GM12878 (cell line): ENCODE measurements at regions of chr22 and their contacts with region 1.

Region 1: GRCh38 chr22:30742291-30743256 is 47.9 kb downstream of the OSBP2 start:
- DNase-seq: no peak
- ATAC-seq: peak; percentile 7; the same call in 1 of the 3 replicates
- H3K4me3 ChIP-seq: no peak overlapping the region; the same call in 1 of the 2 replicates
- H3K27ac ChIP-seq: no peak overlapping the region; the same call in 1 of the 2 replicates
- H3K4me1 ChIP-seq: peaks cover 52% of the 10 kb centered on the region
- H3K27me3 ChIP-seq: no peaks in the 10 kb centered on the region
- CTCF ChIP-seq: no peak
- EP300 ChIP-seq: no peak
- POLR2A ChIP-seq: no peak
- RAD21 ChIP-seq: no peak

Region 2: GRCh38 chr22:30705710-30706651 is 36.6 kb before region 1 on chr22:
- CTCF ChIA-PET with region 1: interaction called, 3 read pairs
- POLR2A ChIA-PET with region 1: interaction called, 4 read pairs
- RAD21 ChIA-PET with region 1: interaction called, 9 read pairs
- SMC1A ChIA-PET with region 1: interaction called, 15 read pairs
- in situ Hi-C with region 1: no loop called
- intact Hi-C with region 1: loop called (anchors 2 kb)
- DNase-seq: peak; percentile 72
- ATAC-seq: peak; percentile 85
- H3K4me3 ChIP-seq: peak overlapping the region; percentile 19; the same call in 1 of the 2 replicates
- H3K27ac ChIP-seq: peak overlapping the region; percentile 70
- H3K4me1 ChIP-seq: peaks cover 35% of the 10 kb centered on the region
- H3K27me3 ChIP-seq: no peaks in the 10 kb centered on the region
- CTCF ChIP-seq: peak in 1 of 3 experiments; percentile 6; a peak in 1 of 6 replicates
- EP300 ChIP-seq: no peak; a peak in 2 of 4 replicates
- POLR2A ChIP-seq: peak; percentile 51; the same call in 1 of the 2 replicates
- RAD21 ChIP-seq: no peak

Region 3: DNA sequence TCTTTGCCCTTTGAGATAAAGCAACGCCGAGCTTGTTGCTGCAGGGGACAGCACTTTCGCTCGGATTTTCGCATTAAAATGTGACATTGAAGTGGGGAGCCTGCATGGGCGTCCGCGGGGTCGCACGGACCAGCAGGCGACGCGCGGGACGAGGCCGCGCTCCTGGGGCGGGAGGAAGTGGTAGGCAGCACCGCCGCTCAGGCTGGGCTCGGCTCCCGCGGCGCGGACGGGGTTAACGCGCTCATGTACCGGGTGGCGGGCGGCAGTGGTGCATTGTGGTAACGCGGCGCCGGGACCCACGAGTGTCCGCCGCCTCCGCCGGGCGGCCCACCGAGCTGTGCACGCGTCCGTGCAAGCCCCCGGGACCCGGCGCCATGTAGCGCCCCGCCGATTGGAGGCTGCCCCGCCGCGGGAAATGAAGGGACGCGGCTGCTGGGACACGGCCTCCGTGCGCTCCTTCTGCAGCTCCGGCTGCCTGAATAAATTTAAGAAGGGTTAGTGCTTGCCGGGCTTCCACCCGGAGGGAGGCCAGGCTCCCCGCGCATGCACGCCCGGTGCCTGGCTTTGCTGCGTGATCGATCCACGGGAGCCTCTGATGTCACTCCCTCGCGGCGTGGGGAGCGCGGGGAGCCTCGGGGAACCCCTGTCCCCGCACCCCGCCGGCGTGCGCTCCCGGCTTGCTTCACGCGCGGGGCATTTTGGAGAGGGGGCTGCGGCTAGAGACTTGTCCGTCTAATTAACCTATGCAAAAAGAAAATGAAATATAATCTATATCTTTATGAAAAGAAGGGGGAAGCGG is 79.8 kb after region 1 on chr22:
- CTCF ChIA-PET with region 1: no interaction called
- POLR2A ChIA-PET with region 1: no interaction called
- RAD21 ChIA-PET with region 1: no interaction called
- SMC1A ChIA-PET with region 1: no interaction called
- in situ Hi-C with region 1: no loop called
- intact Hi-C with region 1: no loop called
- DNase-seq: no peak
- ATAC-seq: peak; percentile 55
- H3K4me3 ChIP-seq: no peak overlapping the region
- H3K27ac ChIP-seq: no peak overlapping the region
- H3K4me1 ChIP-seq: no peaks in the 10 kb centered on the region
- H3K27me3 ChIP-seq: peaks cover 9 to 10% of the 10 kb centered on the region in 2 experiments
- CTCF ChIP-seq: no peak
- EP300 ChIP-seq: no peak
- POLR2A ChIP-seq: no peak
- RAD21 ChIP-seq: no peak

Region 4: DNA sequence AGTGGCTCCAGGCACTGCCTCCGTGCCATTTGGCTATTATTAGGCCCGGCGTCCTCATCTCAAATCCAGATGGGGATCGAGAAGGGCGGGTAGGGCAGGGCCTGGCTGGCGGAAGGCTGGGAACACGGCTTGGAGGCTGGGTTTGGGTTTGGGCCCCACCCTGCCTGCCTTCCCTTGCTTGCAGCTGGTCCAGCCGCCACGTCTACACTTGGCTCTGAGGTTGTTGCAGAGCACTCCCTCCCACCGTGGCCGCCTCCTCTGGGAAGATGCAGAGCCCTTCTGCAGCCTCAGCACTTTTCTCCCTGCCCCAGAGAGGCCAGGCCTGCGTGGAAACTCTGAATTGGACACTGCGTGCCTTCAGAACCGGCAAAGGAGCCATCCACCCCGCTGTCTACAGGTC is 333.4 kb after region 1 on chr22:
- CTCF ChIA-PET with region 1: no interaction called
- POLR2A ChIA-PET with region 1: no interaction called
- RAD21 ChIA-PET with region 1: no interaction called
- SMC1A ChIA-PET with region 1: no interaction called
- in situ Hi-C with region 1: no loop called
- intact Hi-C with region 1: no loop called
- DNase-seq: no peak
- ATAC-seq: no peak
- H3K4me3 ChIP-seq: no peak overlapping the region
- H3K27ac ChIP-seq: no peak overlapping the region
- H3K4me1 ChIP-seq: peaks cover 4% of the 10 kb centered on the region; the same call in 1 of the 2 replicates
- H3K27me3 ChIP-seq: no peaks in the 10 kb centered on the region
- CTCF ChIP-seq: no peak
- EP300 ChIP-seq: no peak
- POLR2A ChIP-seq: no peak
- RAD21 ChIP-seq: no peak